Activated CD4-positive, alpha-beta memory T cell treated with anti-CD3 and anti-CD28 coated beads for 36 hours (primary cell): ENCODE measurements at regions of chr19 and their contacts with region 1.

Region 1: GRCh38 chr19:2887391-2887914 is 13.3 kb upstream of the ZNF57 start:
- DNase-seq: no peak
- H3K4me3 Mint-ChIP-seq: no peak overlapping the region
- H3K27ac Mint-ChIP-seq: no peak overlapping the region
- H3K4me1 Mint-ChIP-seq: peaks cover 9% of the 10 kb centered on the region
- H3K27me3 Mint-ChIP-seq: no peaks in the 10 kb centered on the region

Region 2: GRCh38 chr19:2668175-2668763 is 219.2 kb before region 1 on chr19:
- CTCF ChIA-PET with region 1: no interaction called
- POLR2A ChIA-PET with region 1: no interaction called
- intact Hi-C with region 1: no loop called
- DNase-seq: no peak
- H3K4me3 Mint-ChIP-seq: no peak overlapping the region
- H3K27ac Mint-ChIP-seq: no peak overlapping the region
- H3K4me1 Mint-ChIP-seq: no peaks in the 10 kb centered on the region
- H3K27me3 Mint-ChIP-seq: no peaks in the 10 kb centered on the region

Region 3: DNA sequence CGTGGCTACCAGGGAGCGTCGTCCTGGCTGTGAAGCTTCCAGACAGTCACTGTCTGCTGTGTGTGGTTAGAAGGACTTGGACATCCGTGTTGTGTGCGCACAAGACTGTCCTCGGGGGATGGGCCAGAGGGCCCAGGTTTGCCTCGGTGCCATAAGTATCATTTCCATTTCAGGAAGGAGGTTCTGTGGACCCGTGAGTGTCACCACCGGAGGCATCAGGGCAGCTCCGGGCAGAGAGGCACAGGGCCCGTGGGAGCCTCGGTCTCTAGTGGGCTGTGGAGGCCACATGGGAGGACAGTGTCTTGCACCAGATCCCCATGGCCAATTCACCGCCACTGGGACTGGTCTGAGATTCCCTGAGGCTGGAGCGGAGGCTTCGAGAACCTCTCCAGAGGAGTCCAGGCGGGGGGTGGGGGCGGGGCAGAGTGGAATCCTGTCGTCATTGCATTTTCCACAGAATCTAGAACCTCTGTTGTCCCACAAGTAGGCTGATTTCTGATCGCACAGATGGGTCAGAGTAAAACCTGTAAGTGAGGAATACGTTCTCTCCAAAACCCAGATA is 19.3 kb after region 1 on chr19:
- CTCF ChIA-PET with region 1: interaction called, 17 read pairs
- POLR2A ChIA-PET with region 1: no interaction called
- intact Hi-C with region 1: no loop called
- DNase-seq: no peak
- H3K4me3 Mint-ChIP-seq: no peak overlapping the region
- H3K27ac Mint-ChIP-seq: no peak overlapping the region
- H3K4me1 Mint-ChIP-seq: peaks cover 43% of the 10 kb centered on the region
- H3K27me3 Mint-ChIP-seq: no peaks in the 10 kb centered on the region

Region 4: DNA sequence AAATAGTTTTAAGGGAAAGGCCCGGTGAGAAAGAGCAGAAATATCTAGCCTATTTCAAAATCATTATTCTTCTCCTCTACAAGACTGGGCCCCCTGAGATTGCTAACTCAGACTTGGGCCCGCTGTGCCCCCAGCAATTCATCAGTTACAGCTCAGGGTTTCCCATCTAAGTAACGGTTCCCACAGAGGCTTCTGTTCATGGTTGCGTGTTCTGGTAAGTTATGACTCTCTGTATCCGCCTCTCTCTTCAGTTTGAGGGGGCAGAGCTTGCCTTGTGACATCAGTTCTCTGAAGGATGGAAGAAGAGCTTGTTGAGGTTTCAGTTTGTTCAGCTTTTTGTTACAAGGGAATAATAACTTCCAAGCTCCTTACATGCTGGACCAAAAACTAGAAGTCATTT is 24.9 kb after region 1 on chr19:
- CTCF ChIA-PET with region 1: interaction called, 17 read pairs
- POLR2A ChIA-PET with region 1: no interaction called
- intact Hi-C with region 1: no loop called
- DNase-seq: peak; percentile 71
- H3K4me3 Mint-ChIP-seq: peak overlapping the region; percentile 58
- H3K27ac Mint-ChIP-seq: peak overlapping the region; percentile 94
- H3K4me1 Mint-ChIP-seq: peaks cover 43% of the 10 kb centered on the region
- H3K27me3 Mint-ChIP-seq: no peaks in the 10 kb centered on the region

Region 5: DNA sequence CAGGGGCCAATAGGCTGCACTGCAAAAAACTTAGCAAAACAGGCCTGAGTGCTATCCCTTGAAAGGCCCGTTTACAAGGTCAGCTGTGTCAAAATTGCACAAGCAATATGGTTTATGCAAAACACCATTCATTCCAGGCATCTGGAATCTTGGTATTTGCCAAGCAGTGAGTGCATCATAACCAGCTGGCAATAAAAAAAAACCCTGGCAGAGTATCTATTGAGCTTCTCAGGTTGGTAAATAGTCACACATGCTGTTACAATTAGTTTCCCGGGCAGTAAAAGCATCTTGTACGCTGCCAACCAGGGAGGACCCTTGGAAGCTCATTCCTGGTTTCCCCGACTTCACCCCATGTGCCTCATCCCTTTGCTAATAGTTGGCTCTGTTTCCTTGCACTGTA is 36.1 kb after region 1 on chr19:
- CTCF ChIA-PET with region 1: interaction called, 14 read pairs
- POLR2A ChIA-PET with region 1: no interaction called
- intact Hi-C with region 1: no loop called
- DNase-seq: no peak
- H3K4me3 Mint-ChIP-seq: no peak overlapping the region
- H3K27ac Mint-ChIP-seq: no peak overlapping the region
- H3K4me1 Mint-ChIP-seq: no peaks in the 10 kb centered on the region
- H3K27me3 Mint-ChIP-seq: no peaks in the 10 kb centered on the region

Region 6: DNA sequence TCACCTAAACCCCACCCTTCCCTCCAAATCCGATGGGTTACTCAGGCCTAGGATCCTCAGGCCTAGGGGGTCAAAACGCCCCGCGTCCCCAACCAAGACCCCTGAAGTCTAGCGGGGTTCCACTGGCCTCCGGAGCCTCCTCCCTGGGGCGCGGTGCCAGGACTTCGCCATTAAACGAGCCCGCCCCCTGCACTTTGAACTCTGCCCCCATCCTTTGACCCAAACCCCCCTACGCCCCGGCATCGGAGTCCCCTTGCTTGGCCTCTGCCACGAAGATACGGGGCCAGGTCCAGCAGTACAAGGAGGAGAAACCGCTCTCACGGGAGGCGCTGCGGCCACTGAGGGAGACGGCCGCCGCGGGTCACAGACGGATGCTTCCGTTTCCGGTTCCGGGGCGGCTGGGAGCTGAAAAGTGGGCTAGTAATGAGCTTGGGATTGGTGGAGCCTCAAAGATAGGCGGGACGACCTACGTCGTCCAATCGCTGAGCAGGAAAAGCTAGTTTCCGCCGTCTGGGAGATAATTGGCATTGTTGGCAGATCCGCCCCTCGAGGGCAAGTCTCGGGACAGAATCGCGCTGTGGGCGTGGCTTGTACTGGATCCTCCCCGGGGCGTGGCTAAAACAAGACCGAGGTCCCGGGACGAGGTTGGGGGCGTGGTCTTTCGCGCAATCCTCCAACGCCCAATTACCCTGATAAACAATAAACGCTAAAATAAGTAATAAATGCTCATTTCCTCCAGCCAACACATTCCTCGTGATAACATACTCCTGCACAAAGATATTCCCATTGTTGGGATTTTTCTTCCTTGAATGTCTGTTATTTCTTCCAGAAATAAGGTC is 63.1 kb after region 1 on chr19:
- CTCF ChIA-PET with region 1: interaction called, 34 read pairs
- POLR2A ChIA-PET with region 1: no interaction called
- intact Hi-C with region 1: loop called (anchors 2 kb)
- DNase-seq: peak; percentile 100
- H3K4me3 Mint-ChIP-seq: peak overlapping the region; percentile 98
- H3K27ac Mint-ChIP-seq: peak overlapping the region; percentile 97
- H3K4me1 Mint-ChIP-seq: peaks cover 25% of the 10 kb centered on the region
- H3K27me3 Mint-ChIP-seq: no peaks in the 10 kb centered on the region

Region 7: DNA sequence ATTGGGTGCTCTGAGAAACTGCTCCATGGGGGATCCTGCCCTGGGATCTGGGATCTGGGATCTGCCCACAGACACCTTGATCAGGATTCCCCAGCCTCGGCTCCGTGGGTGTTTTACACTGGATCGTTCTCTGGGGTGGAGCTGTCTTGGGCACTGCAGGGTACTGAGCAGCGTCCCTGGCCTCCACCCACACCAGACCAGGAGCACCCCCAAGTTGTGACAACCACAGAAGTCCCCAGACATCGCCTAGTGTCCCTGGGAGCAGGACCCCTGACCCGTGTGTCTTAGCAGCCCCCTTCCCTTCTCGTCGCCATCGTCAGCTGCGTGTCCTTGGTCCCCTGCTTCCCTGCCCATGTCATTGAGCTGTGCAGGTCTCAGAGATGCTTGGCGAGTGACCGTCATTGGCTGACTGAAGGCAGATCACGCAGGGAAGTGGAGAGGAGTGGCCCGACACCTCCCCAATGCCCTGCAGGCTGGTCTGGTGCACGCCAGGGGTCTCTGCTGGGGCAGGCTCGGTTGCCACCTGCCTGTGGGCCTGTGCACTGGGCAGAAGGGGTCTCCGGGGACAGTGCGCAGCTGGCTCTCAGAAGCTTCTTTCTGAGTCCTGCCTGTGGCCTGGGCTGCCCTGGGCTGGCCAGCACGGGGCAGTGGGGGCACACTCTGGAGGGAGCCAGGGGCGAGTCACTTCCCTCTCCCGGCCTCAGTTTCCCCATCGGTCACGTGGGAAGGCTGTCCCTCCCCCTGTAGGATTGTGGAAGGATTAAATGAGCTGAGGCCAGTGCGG is 212.8 kb after region 1 on chr19:
- CTCF ChIA-PET with region 1: interaction called, 7 read pairs
- POLR2A ChIA-PET with region 1: no interaction called
- intact Hi-C with region 1: loop called (anchors 5 kb)
- DNase-seq: no peak
- H3K4me3 Mint-ChIP-seq: no peak overlapping the region
- H3K27ac Mint-ChIP-seq: no peak overlapping the region
- H3K4me1 Mint-ChIP-seq: peaks cover 25% of the 10 kb centered on the region
- H3K27me3 Mint-ChIP-seq: peaks cover 20% of the 10 kb centered on the region